Left cardiac atrium (tissue), 4 donors: ENCODE measurements at regions of chr3 and their contacts with region 1.

Region 1: DNA sequence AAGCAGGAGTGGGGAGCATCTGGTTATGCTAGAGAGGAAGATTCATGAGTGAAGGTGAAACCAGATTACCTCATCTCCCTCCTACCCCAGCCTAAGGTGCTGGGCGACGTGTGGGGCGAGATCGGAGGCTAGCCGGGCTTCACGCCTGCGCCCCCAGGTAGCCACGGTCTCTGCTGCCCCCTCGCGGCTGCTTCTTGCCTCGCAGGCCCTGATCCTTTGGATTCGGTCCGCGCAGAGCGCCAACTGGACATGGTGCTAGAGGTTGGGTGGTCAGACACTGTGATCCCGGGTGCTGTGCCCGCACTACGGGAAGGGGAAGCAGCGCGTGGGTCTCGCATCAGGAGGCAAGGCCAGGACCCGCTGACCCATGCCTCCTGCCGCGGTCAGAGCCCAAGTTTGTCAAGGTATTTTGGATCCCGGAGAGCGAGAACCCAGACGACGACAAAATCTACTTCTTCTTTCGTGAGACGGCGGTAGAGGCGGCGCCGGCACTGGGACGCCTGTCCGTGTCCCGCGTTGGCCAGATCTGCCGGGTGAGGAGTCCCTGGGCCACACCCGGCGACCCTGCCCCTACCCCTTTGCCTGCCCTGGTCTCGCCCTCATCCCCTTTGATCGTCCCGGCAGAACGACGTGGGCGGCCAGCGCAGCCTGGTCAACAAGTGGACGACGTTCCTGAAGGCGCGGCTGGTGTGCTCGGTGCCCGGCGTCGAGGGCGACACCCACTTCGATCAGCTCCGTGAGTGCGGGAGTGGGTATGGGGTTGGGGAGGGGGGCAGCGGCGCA is 4.2 kb downstream of the SEMA3B start:
- DNase-seq: peak; percentile 86
- ATAC-seq: peak; percentile 60 to 62

Region 2: DNA sequence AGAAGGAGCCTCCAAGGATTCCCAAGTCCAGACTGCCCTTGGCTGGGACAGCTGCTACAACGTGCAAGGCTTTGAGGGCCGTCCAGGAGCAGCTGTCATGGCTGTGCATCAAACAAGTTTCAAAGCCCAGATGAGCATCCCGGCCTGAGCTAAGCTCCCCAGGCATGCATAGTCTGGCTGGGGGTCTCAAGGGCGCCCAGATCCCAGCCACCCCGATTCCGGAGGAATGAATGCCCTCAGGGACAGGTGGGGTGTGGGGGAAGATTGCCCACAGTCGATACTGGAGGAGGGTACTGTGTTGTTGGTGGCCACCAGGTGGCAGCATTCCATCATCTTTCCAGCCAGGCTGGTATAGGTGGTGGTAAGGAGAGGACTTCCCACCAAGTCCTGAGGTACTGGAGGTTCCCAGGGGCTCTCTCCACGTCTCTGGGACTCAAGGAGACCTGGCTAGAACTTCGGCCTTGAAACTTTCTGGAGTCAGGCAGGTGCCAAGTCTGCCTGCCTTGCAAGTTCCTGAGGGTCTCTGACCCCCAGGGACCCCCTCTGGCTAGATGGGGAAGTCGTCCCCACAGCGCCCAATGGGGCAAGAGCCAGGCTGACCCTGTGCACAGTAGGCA is 151.6 kb before region 1 on chr3:
- intact Hi-C with region 1: loop called in 1 of 2 experiments (anchors 5 kb)
- DNase-seq: peak; percentile 81
- ATAC-seq: peak; percentile 83 to 89

Region 3: GRCh38 chr3:50192689-50193141 is 80.4 kb before region 1 on chr3:
- intact Hi-C with region 1: loop called (anchors 2 to 5 kb)
- DNase-seq: peak; percentile 65
- ATAC-seq: peak in 1 of 2 donors; percentile 35

Region 4: DNA sequence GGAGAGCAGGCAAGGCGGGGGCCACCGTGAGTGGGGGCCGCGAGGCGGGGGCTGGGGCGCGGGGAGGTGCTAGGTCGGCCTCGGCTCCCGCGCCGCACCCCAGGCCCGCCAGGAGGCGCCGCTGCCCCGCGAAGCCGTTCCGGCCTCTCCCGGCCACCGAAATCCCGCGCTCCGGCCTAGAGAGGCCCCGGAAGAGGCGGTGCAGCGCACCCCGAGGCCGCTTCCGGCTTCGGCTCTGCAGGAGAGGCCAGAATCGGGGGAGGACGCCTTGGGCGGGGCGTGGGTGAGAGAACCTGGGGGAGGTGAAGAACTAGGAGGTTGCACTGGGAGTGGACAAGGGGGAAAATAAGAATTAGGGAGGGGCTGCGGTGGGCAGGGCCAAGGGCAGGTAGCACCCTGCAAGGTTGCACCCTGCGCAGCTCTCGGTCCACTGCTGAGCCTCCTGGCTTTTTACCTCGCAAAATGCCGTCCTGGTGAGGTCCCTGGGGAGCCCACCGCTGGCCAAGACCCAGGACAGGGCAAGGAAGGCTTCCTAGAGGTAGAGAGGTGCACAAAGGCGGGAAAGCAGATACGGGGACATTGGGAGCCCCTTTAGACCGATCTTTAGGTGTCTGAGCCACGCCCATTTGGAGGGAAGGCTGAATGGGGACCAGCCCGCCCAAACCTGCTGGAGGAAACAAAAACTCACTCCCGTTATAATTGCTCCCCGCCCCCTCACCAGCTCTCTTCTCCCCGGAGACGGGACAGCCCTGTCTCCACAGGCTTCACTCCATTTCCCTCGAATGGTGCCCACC is 45.5 kb before region 1 on chr3:
- intact Hi-C with region 1: loop called (anchors 2 kb)
- DNase-seq: peak; percentile 93
- ATAC-seq: peak; percentile 93

Region 5: DNA sequence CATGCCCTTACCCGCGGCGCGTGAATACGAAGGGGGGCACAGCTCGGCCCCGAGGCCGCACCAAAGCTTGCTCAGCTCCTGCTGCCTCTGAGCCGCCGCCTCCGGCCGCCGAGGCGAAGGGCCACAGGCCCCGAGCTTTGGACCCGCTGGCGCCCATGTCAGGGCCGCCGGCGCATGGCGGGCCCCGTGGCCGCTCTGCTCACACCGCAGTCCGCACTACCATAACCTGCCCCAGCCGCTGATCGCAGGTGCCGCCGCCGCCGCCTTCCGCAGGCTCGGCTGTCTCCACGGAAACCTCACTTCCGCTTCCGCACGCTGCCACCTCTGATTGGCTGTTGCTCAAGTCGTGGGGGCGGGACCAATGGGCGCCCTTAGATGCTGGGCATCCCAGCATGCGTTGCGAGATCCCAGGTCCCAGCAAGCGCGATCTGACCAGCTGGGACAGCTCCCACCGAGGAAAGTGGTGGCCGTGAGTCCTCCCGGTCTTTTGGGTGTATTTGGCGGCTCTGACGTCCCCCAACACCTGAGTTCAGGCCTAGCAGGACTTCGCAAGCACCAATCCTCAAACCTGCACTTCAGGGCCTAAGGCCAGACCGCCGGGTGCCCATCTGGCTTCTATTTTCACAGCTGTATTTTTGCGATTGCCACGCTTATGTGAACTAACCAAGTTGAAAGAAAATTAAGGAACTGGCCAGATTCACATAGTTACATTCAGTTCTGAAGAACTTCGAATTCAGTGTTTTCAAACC is 55.0 kb after region 1 on chr3 and contains the start of gene TUSC2:
- intact Hi-C with region 1: loop called in 1 of 2 experiments (anchors 5 kb)
- DNase-seq: peak; percentile 98
- ATAC-seq: peak; percentile 84 to 93
- total RNA-seq, gene TUSC2: 26.2 to 27.5 TPM

Region 6: GRCh38 chr3:50358911-50359759 is 86.0 kb after region 1 on chr3 and contains the start of gene TMEM115:
- intact Hi-C with region 1: no loop called
- DNase-seq: peak; percentile 98
- ATAC-seq: peak; percentile 97 to 98
- total RNA-seq, gene TMEM115: 28.7 to 33.4 TPM